Activated CD4-positive, alpha-beta memory T cell treated with anti-CD3 and anti-CD28 coated beads for 36 hours (primary cell): ENCODE measurements at regions of chr1 and their contacts with region 1.

Region 1: GRCh38 chr1:24201941-24202440 is 14.9 kb upstream of the IFNLR1 start:
- DNase-seq: peak; percentile 76
- H3K4me3 Mint-ChIP-seq: no peak overlapping the region
- H3K27ac Mint-ChIP-seq: no peak overlapping the region
- H3K4me1 Mint-ChIP-seq: peaks cover 23% of the 10 kb centered on the region
- H3K27me3 Mint-ChIP-seq: peaks cover 3% of the 10 kb centered on the region

Region 2: DNA sequence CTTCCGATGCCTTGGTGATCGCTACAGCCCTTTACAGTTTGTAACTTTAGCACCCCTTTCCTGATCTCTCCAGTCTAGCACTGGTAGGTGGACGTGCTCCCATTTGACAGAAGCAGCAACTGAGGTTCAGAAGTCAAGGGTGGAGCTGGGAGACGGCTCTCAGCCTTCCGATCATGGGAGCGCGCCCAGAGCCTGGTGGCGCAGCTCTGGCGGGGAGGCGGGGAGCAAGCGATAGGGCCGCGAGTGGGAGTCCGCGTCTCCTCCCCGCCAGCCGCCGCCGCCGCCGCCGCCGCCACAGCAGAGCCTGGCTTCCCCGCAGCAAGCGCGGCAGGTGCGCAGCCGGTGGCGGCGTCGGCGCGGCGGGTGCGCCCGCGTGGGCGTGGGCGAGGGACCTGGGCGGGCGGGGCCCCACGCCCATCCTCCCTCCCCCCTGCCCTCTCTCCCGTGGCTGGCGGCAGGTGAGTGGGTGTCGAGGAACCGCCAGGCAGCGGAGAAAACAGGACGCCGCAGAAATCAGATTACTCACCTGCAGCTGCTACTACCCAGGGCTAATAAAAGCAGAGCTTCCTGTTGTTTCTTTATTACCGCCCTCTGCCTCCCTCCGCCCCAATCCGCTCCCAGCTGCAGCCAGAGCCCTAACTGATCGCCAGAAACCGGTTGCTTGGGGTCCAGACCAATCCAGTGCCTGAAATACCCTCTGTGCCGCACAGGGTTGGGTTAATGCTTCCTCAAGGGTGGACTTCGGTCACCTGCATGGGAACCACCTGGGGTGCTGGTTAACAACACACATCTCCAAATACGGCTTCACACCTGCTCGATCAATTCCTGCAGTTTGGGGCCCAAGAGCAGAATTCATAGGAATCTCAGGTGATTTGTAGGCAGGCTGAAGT is 582.4 kb before region 1 on chr1:
- CTCF ChIA-PET with region 1: no interaction called
- POLR2A ChIA-PET with region 1: no interaction called
- intact Hi-C with region 1: loop called (anchors 10 kb)
- DNase-seq: peak; percentile 90
- H3K4me3 Mint-ChIP-seq: peak overlapping the region; percentile 67
- H3K27ac Mint-ChIP-seq: peak overlapping the region; percentile 76
- H3K4me1 Mint-ChIP-seq: peaks cover 76% of the 10 kb centered on the region
- H3K27me3 Mint-ChIP-seq: no peaks in the 10 kb centered on the region

Region 3: DNA sequence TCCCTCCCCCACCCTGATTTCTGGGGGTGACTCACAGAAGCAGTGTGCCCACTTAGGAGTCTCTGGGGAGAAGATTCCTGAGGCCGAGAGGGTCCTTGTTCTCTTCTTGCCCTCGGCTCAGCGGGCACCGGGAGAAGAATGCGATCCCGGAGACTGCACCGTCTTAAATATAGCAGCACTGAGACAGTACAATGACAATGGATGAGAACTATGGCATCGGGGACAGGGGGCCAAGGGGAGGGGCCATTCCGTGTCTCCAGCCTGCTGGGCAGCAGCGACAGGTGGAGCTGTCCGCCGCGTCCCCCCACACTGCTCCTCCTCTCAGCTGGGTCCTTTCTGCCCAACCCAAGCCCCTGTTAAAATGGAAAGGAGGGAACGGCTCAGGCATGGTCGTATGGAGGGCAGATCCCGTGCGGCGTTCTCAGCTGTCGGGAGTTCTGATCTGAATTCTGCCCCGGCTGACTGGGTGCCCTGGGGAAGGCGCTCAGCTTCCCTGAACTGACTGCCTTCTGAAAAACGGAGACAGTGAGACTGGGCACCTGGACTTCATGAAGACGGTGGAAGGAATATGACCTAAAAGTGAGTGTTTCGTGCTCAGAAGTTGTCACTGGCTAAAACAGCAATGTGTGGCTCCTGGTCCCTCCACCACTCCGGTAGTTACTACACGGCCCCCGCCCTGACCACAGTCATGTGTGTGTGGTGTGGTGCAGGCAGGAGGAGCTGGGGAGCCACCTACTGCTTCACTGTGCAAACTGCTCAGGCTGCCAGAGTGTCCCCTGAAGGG is 89.8 kb before region 1 on chr1 and contains the start of gene MYOM3:
- CTCF ChIA-PET with region 1: no interaction called
- POLR2A ChIA-PET with region 1: no interaction called
- intact Hi-C with region 1: no loop called
- DNase-seq: peak; percentile 77
- H3K4me3 Mint-ChIP-seq: peak within 1 kb of the TSS; percentile 12
- H3K27ac Mint-ChIP-seq: no peak within 1 kb of the TSS
- H3K4me1 Mint-ChIP-seq: peaks cover 2% of the 10 kb centered on the region
- H3K27me3 Mint-ChIP-seq: peaks cover 19% of the 10 kb centered on the region
- total RNA-seq, gene MYOM3: not detected

Region 4: GRCh38 chr1:24186993-24187805 is 14.8 kb before region 1 on chr1 and contains the start of gene IFNLR1:
- CTCF ChIA-PET with region 1: interaction called, 100 read pairs
- POLR2A ChIA-PET with region 1: no interaction called
- intact Hi-C with region 1: no loop called
- DNase-seq: peak; percentile 91
- H3K4me3 Mint-ChIP-seq: peak within 1 kb of the TSS; percentile 80
- H3K27ac Mint-ChIP-seq: peak within 1 kb of the TSS; percentile 54
- H3K4me1 Mint-ChIP-seq: peaks cover 48% of the 10 kb centered on the region
- H3K27me3 Mint-ChIP-seq: peaks cover 2% of the 10 kb centered on the region
- total RNA-seq, gene IFNLR1: 6.2 to 10.0 TPM

Region 5: DNA sequence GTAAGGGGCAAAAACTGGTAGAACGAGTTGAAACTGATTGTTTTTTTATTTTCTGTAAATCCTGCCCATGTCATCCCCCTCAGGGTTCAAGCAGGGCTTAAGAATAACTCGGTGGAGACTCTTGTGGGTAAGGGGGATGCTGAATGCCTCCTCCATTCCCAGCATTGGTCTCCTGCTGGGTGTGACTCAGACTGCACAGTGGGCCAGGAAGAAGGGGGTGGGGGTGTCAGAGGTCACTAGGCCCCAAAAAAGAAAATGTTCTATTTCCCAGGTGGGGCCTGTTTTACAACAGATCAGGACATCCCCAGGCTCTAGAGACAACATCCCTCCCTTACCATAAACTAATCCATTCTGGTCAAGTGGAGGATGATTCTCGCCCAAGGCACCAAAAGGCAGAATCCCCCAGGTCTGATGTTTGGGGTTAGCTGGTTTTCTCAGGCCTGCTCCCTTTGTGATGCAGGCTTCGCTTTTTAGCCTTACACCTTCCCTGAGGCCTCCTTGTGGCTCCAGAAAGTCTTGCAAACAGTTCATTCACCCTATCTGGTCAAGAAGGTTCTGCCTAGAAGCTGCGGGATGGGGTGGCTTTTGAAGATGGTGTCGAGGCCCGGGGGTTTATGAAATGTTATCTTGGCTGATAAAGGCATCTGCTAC is 106.5 kb after region 1 on chr1:
- CTCF ChIA-PET with region 1: interaction called, 9 read pairs
- POLR2A ChIA-PET with region 1: no interaction called
- intact Hi-C with region 1: loop called (anchors 2 kb)
- DNase-seq: no peak
- H3K4me3 Mint-ChIP-seq: no peak overlapping the region
- H3K27ac Mint-ChIP-seq: no peak overlapping the region
- H3K4me1 Mint-ChIP-seq: peaks cover 3% of the 10 kb centered on the region
- H3K27me3 Mint-ChIP-seq: peaks cover 4% of the 10 kb centered on the region

Region 6: DNA sequence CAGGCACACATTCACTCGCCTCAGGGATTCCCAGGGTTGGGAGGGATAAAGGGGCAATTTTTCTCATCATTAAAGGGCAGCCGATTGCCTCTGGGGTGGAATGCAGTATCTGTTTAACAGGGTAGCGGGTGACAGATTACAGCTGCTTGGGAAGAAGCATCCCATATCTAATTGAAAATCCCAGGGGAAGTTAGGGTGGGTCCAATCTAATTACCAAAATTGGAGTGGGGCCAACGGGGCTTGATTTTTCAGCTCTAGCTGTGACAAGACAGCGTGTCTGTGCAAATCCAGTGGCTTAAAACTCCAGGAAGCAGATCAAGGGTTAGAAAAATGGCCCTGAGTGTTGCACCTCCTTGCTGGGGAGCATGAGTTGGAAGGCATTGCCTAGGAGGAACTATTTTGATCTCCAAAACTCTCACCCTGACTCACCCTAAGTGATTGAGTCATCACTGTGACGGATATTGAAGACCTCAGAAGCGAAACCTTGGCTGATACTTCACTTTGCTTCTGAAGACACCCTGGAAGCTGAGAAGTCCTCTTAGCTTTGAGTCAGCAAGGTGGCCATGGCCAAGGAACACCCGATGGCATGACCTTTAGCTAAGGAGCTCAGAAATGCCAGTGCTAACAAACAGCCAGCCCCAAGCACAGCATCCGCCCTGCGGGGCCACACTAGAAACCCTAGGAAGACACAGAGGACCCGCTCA is 163.1 kb after region 1 on chr1:
- CTCF ChIA-PET with region 1: interaction called, 12 read pairs
- POLR2A ChIA-PET with region 1: no interaction called
- intact Hi-C with region 1: no loop called
- DNase-seq: peak; percentile 65
- H3K4me3 Mint-ChIP-seq: no peak overlapping the region
- H3K27ac Mint-ChIP-seq: no peak overlapping the region
- H3K4me1 Mint-ChIP-seq: peaks cover 17% of the 10 kb centered on the region
- H3K27me3 Mint-ChIP-seq: no peaks in the 10 kb centered on the region

Region 7: GRCh38 chr1:24400085-24400484 is 198.1 kb after region 1 on chr1:
- CTCF ChIA-PET with region 1: interaction called, 618 read pairs
- POLR2A ChIA-PET with region 1: no interaction called
- intact Hi-C with region 1: no loop called
- DNase-seq: no peak
- H3K4me3 Mint-ChIP-seq: no peak overlapping the region
- H3K27ac Mint-ChIP-seq: no peak overlapping the region
- H3K4me1 Mint-ChIP-seq: peaks cover 9% of the 10 kb centered on the region
- H3K27me3 Mint-ChIP-seq: no peaks in the 10 kb centered on the region

Region 8: DNA sequence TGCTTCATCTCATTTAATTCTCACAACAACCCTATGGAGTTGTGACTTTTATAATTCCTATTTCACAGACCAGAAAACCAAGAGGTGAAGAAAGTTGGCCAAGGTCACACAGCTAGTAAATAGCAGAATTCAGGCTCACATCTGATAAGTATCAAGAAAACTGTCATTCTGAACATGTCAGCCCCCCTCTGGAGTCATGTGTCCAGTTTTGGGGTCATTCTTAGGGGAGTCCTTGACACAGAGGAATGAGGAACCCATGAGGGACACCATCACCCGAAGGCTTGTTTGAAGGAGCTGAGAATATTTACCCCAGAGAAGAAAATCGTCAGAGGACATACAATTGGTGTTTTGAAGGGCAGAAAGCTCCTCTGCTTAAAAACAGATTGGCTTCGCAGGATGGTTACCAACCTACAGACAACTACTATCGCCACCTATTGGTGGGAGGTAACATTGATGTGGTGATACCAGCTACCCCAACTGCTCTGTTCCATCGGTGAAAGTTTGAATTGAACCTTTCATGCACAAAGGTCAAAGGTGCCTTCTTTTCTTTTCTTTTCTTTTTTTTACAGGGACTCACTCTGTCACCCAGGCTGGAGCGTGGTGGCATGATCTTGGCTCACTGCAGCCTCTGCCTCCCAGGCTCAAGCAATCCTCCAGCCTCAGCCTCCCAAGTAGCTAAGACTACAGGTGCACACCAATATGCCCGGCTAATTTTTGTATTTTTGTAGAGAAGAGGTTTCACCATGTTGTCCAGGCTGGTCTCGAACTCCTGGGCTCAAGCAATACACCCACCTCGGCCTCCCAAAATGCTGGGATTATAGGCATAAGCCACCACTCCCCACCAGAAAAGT is 385.2 kb after region 1 on chr1:
- CTCF ChIA-PET with region 1: interaction called, 27 read pairs
- POLR2A ChIA-PET with region 1: no interaction called
- intact Hi-C with region 1: no loop called
- DNase-seq: peak; percentile 49
- H3K4me3 Mint-ChIP-seq: no peak overlapping the region
- H3K27ac Mint-ChIP-seq: peak overlapping the region; percentile 31
- H3K4me1 Mint-ChIP-seq: peaks cover 5% of the 10 kb centered on the region
- H3K27me3 Mint-ChIP-seq: peaks cover 2% of the 10 kb centered on the region